ENCODE measurements at regions of chr1 and their contacts with region 1.

Region 1: GRCh38 chr1:27284425-27285273 is 37.3 kb upstream of the TMEM222 start:
- DNase-seq: peak; percentile 74 to 80 (median 78)
- H3K4me3 ChIP-seq: no peak overlapping the region
- H3K4me3 Mint-ChIP-seq: no peak overlapping the region
- H3K27ac ChIP-seq: no peak overlapping the region
- H3K27ac Mint-ChIP-seq: peak overlapping the region in 1 of 7 donors; percentile 15
- H3K4me1 ChIP-seq: no peaks in the 10 kb centered on the region
- H3K4me1 Mint-ChIP-seq: no peaks in the 10 kb centered on the region
- H3K27me3 ChIP-seq: no peaks in the 10 kb centered on the region
- H3K27me3 Mint-ChIP-seq: peaks cover 0 to 3% (median 0%) of the 10 kb centered on the region in 3 donors
- CTCF ChIP-seq: peak; percentile 84

Region 2: GRCh38 chr1:27102707-27103491 is 181.8 kb before region 1 on chr1:
- intact Hi-C with region 1: loop called (anchors 1 to 2 kb)
- DNase-seq: peak; percentile 65 to 73 (median 69)
- H3K4me3 ChIP-seq: no peak overlapping the region
- H3K4me3 Mint-ChIP-seq: no peak overlapping the region
- H3K27ac ChIP-seq: no peak overlapping the region
- H3K27ac Mint-ChIP-seq: peak overlapping the region in 4 of 7 donors; percentile 71 to 83 (median 75)
- H3K4me1 ChIP-seq: peaks cover 42 to 56% of the 10 kb centered on the region in 2 donors
- H3K4me1 Mint-ChIP-seq: peaks cover 45% of the 10 kb centered on the region
- H3K27me3 ChIP-seq: no peaks in the 10 kb centered on the region
- H3K27me3 Mint-ChIP-seq: peaks cover 0 to 9% (median 0%) of the 10 kb centered on the region in 3 donors
- CTCF ChIP-seq: peak; percentile 99

Region 3: DNA sequence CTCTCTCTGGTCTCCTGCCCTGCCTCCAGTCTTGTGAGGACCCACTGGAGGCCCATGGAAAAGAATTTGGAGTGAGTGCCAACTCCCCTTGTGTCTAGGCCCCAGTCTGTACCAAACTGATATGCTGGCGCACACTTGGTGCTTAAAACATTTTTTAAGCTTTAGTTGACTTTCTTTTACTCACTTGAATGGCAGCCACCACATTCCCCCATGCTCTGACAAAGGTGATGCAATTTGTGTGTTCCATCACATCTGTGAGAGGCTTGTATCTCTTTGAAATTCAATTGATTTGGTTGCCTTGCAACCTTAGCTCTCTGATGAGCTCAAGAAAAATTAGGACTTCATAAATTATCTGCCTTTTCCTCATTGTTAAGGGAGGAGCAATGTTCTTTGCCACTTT is 80.7 kb before region 1 on chr1:
- intact Hi-C with region 1: loop called in 1 of 2 experiments (anchors 2 kb)
- DNase-seq: no peak
- H3K4me3 ChIP-seq: no peak overlapping the region
- H3K4me3 Mint-ChIP-seq: no peak overlapping the region
- H3K27ac ChIP-seq: no peak overlapping the region
- H3K27ac Mint-ChIP-seq: peak overlapping the region in 1 of 7 donors; percentile 7
- H3K4me1 ChIP-seq: no peaks in the 10 kb centered on the region
- H3K4me1 Mint-ChIP-seq: peaks cover 3% of the 10 kb centered on the region
- H3K27me3 ChIP-seq: no peaks in the 10 kb centered on the region
- H3K27me3 Mint-ChIP-seq: peaks cover 0 to 10% (median 3%) of the 10 kb centered on the region in 3 donors
- CTCF ChIP-seq: no peak

Region 4: DNA sequence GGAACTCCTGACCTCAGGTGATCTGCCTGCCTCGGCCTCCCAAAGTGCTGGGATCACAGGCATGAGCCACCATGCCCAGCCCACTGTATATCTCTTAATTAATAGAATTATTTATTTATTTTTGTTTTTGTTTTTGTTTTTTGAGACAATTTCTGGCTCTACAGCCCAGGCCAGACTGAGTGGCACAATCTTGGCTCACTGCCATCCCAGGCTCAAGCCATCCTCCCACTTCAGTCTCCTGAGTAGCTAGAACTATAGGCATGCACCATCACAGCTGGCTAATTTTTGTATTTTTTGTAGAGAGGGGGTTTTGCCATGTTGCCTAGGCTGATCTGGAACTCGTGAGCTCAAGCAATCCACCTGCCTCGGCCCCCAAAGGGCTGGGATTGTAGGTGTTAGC is 65.9 kb before region 1 on chr1:
- intact Hi-C with region 1: no loop called
- DNase-seq: no peak
- H3K4me3 ChIP-seq: no peak overlapping the region
- H3K4me3 Mint-ChIP-seq: no peak overlapping the region
- H3K27ac ChIP-seq: no peak overlapping the region
- H3K27ac Mint-ChIP-seq: no peak overlapping the region
- H3K4me1 ChIP-seq: no peaks in the 10 kb centered on the region
- H3K4me1 Mint-ChIP-seq: no peaks in the 10 kb centered on the region
- H3K27me3 ChIP-seq: no peaks in the 10 kb centered on the region
- H3K27me3 Mint-ChIP-seq: peaks cover 2 to 3% (median 2%) of the 10 kb centered on the region in 3 donors
- CTCF ChIP-seq: no peak

Measured in CD14-positive monocyte (primary cell).